ENCODE measurements at regions of chr11 and their contacts with region 1.

Region 1: DNA sequence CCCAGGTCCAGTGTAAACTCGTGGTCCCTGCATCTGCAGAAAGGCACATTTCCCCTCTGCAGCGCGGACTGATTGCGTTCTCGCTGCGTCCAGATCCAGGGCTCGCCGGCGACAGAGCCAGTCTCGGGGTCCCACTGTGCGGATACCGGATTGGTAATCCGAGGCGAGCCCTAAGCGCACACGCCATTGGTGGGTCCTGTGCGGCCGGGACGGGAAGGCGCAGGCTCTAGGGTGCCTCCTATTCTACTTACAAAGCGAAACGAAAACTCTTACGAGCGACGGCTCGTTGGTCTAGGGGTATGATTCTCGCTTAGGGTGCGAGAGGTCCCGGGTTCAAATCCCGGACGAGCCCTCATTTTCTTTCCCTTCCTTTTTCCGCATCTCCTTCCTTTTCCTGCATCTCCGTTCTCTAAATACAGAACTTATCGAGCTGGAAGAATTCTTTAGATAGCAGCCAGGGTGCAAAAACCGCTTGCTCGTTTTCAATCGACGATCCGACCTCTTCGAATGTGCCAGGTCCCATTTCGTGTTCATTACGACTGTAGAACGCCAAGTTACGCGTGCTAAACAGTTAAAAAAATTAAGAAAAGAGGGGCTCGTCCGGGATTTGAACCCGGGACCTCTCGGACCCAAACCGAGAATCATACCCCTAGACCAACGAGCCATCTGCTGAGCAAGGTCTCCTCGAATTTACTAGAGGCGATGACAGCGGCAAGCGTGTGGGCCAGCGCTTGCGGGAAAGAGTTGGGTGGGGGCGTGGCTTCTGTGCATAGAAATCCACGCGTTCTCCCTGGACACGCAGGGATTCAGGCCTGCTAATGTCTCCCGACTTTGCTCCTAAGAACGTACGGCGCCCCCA is 29.2 kb upstream of the WNT11 start:
- DNase-seq: peak; percentile 89 to 93 (median 91)
- H3K4me3 ChIP-seq: peak overlapping the region; percentile 87 to 92
- H3K4me3 Mint-ChIP-seq: peak overlapping the region; percentile 92 to 98 (median 96)
- H3K27ac ChIP-seq: peak overlapping the region; percentile 50
- H3K27ac Mint-ChIP-seq: peak overlapping the region; percentile 89 to 100 (median 96)
- H3K4me1 ChIP-seq: peaks cover 42% of the 10 kb centered on the region
- H3K4me1 Mint-ChIP-seq: peaks cover 27 to 59% (median 44%) of the 10 kb centered on the region in 4 donors
- H3K27me3 ChIP-seq: no peaks in the 10 kb centered on the region
- H3K27me3 Mint-ChIP-seq: peaks cover 0 to 9% of the 10 kb centered on the region in 2 donors

Region 2: DNA sequence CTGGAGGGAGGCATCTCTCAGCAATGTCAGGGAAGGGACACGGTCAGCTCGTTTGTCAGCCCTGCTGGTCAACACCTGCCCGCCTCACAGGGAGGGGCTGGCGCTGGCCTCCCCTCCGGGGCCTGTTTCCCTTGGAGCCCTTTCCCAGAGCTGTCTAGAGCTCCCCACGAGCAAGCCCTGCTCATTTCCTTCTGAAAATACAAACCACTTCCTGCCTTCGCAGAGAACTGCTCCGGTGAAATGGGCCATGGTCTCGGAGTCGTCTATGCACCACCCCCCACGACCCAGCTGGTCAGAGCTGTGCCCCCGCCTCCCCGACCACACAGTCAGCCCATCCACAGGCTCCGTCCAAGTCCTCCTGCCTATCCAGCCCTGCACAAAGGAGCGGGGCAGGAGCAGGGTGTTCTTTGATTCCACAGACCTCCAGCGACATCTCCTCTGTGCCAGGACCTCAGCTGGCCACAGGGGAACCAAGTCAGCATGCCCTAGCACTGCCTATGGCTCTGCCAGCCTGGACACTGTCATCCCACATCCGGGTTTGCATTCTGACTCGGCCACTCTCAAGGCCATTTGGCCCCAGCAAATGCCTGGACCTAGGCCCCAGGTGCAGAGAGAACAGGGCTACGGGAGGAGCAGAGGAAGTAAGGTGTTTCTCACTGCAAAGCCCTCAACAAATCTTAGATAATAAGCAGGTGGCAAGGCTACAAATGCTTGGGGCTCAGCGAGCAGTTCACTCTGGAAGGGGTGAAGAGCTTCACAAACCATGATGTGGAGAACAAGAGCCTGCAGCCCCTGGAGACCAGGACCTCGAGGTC is 52.9 kb after region 1 on chr11:
- CTCF ChIA-PET with region 1: interaction called, 3 read pairs
- POLR2A ChIA-PET with region 1: interaction called, 11 read pairs
- intact Hi-C with region 1: no loop called
- DNase-seq: peak in 4 of 5 donors; percentile 16 to 31 (median 25)
- H3K4me3 ChIP-seq: no peak overlapping the region
- H3K4me3 Mint-ChIP-seq: peak overlapping the region in 7 of 8 donors; percentile 58 to 80 (median 71)
- H3K27ac ChIP-seq: peak overlapping the region; percentile 27
- H3K27ac Mint-ChIP-seq: peak overlapping the region; percentile 81 to 96 (median 93)
- H3K4me1 ChIP-seq: peaks cover 34% of the 10 kb centered on the region
- H3K4me1 Mint-ChIP-seq: peaks cover 31 to 48% (median 36%) of the 10 kb centered on the region in 4 donors
- H3K27me3 ChIP-seq: no peaks in the 10 kb centered on the region
- H3K27me3 Mint-ChIP-seq: no peaks in the 10 kb centered on the region

Region 3: GRCh38 chr11:76347466-76347865 is 112.0 kb after region 1 on chr11:
- CTCF ChIA-PET with region 1: no interaction called
- POLR2A ChIA-PET with region 1: no interaction called
- intact Hi-C with region 1: no loop called
- DNase-seq: no peak
- H3K4me3 ChIP-seq: no peak overlapping the region
- H3K4me3 Mint-ChIP-seq: no peak overlapping the region
- H3K27ac ChIP-seq: no peak overlapping the region
- H3K27ac Mint-ChIP-seq: no peak overlapping the region
- H3K4me1 ChIP-seq: no peaks in the 10 kb centered on the region
- H3K4me1 Mint-ChIP-seq: no peaks in the 10 kb centered on the region
- H3K27me3 ChIP-seq: no peaks in the 10 kb centered on the region
- H3K27me3 Mint-ChIP-seq: no peaks in the 10 kb centered on the region

Region 4: DNA sequence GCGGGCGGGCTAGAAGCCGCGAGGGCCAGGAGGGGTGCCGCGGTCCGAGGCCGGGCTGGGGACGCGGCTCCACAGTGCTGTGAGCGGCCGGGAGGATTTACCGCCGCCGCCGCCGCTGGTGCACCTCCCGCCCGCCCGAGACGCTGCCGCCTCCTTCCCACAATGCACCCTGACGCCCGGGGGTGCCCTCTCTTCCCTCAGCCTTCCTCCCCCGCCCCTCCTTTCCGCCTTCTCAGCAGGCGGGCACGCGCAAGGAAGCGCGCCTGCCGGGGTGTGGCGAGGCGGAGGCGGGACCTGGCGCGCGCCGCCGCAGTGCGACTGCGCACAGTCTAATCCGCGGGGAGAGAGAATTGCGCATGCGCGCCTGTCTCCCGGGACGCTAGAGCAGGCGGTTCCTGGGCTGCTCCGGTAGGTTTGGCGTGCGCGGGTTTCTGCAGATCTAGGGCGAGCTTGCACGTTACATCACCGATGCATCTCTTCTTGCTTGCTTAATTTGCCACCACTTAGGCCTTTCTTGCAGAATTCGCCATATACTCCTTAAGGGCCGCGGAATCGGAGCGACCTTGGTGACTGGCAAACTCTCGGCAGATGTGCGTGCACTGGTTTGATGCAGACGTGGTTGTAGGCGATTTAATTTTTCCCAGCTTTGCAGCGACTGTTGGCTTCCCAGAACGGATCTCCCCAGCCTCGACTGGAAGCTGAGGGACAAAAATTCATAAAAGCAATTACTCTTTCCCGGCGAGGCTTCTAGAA is 145.7 kb after region 1 on chr11 and contains the starts of genes GVQW3 and THAP12:
- CTCF ChIA-PET with region 1: no interaction called
- POLR2A ChIA-PET with region 1: interaction called, 3 read pairs
- intact Hi-C with region 1: loop called (anchors 2 kb)
- DNase-seq: peak; percentile 97 to 99 (median 98)
- H3K4me3 ChIP-seq: peak within 1 kb of the TSS; percentile 82 to 86
- H3K4me3 Mint-ChIP-seq: peak within 1 kb of the TSS; percentile 94 to 99 (median 98)
- H3K27ac ChIP-seq: peak within 1 kb of the TSS; percentile 68
- H3K27ac Mint-ChIP-seq: peak within 1 kb of the TSS; percentile 88 to 96 (median 95)
- H3K4me1 ChIP-seq: peaks cover 56% of the 10 kb centered on the region
- H3K4me1 Mint-ChIP-seq: peaks cover 41 to 68% (median 58%) of the 10 kb centered on the region in 4 donors
- H3K27me3 ChIP-seq: no peaks in the 10 kb centered on the region
- H3K27me3 Mint-ChIP-seq: no peaks in the 10 kb centered on the region
- total RNA-seq, gene GVQW3: 8.7 to 10.1 TPM
- total RNA-seq, gene THAP12: 53.7 to 57.3 TPM

Region 5: GRCh38 chr11:76444384-76445123 is 209.1 kb after region 1 on chr11 and contains the start of gene EMSY:
- CTCF ChIA-PET with region 1: no interaction called
- POLR2A ChIA-PET with region 1: no interaction called
- intact Hi-C with region 1: loop called (anchors 1 kb)
- DNase-seq: peak; percentile 92 to 96 (median 94)
- H3K4me3 ChIP-seq: peak within 1 kb of the TSS; percentile 78 to 84
- H3K4me3 Mint-ChIP-seq: peak within 1 kb of the TSS; percentile 90 to 97 (median 97)
- H3K27ac ChIP-seq: peak within 1 kb of the TSS; percentile 92
- H3K27ac Mint-ChIP-seq: peak within 1 kb of the TSS; percentile 94 to 98 (median 98)
- H3K4me1 ChIP-seq: peaks cover 30% of the 10 kb centered on the region
- H3K4me1 Mint-ChIP-seq: peaks cover 25 to 40% (median 34%) of the 10 kb centered on the region in 4 donors
- H3K27me3 ChIP-seq: no peaks in the 10 kb centered on the region
- H3K27me3 Mint-ChIP-seq: no peaks in the 10 kb centered on the region
- total RNA-seq, gene EMSY: 46.3 to 52.9 TPM